ENCODE measurements at regions of chrX and their contacts with region 1.

Region 1: DNA sequence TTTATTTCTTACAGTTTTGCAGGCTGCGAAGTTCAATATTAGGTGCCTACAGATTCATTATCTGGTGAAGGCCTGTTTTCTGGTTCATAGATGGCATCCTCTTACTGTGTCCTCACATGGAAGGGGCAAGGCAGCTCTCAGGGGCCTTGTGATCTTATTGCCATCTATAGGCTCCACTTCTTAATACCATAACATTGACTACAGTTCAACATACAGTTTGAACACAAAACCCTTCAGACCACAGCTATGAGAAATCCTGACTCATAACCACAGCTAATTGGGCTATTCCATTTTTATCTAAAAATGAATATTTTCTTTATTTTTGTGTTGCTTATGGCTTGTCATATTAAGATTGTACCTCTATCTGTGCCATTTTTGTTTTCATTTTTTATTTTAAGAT is 72.3 kb downstream of the STAG2 start:
- DNase-seq: no peak
- ATAC-seq: peak; percentile 21; the same call in 1 of the 3 replicates
- H3K4me3 ChIP-seq: no peak overlapping the region
- H3K27ac ChIP-seq: no peak overlapping the region
- H3K4me1 ChIP-seq: no peaks in the 10 kb centered on the region
- H3K27me3 ChIP-seq: no peaks in the 10 kb centered on the region
- CTCF ChIP-seq: no peak
- EP300 ChIP-seq: no peak
- POLR2A ChIP-seq: no peak
- RAD21 ChIP-seq: no peak

Region 2: GRCh38 chrX:123277821-123278423 is 755.9 kb before region 1 on chrX:
- CTCF ChIA-PET with region 1: no interaction called
- POLR2A ChIA-PET with region 1: no interaction called
- RAD21 ChIA-PET with region 1: no interaction called
- SMC1A ChIA-PET with region 1: no interaction called
- in situ Hi-C with region 1: no loop called
- intact Hi-C with region 1: no loop called
- DNase-seq: no peak
- ATAC-seq: peak; percentile 59
- H3K4me3 ChIP-seq: no peak overlapping the region
- H3K27ac ChIP-seq: no peak overlapping the region
- H3K4me1 ChIP-seq: no peaks in the 10 kb centered on the region
- H3K27me3 ChIP-seq: no peaks in the 10 kb centered on the region
- CTCF ChIP-seq: peak; percentile 11 to 21 (median 11); a peak in 3 of 6 replicates
- EP300 ChIP-seq: no peak
- POLR2A ChIP-seq: no peak
- RAD21 ChIP-seq: peak; percentile 28; the same call in 1 of the 2 replicates

Region 3: GRCh38 chrX:124045109-124045508 is 11.3 kb after region 1 on chrX:
- CTCF ChIA-PET with region 1: interaction called, 4 read pairs
- POLR2A ChIA-PET with region 1: no interaction called
- RAD21 ChIA-PET with region 1: no interaction called
- SMC1A ChIA-PET with region 1: interaction called, 11 read pairs
- in situ Hi-C with region 1: no loop called
- intact Hi-C with region 1: no loop called
- DNase-seq: no peak
- ATAC-seq: no peak
- H3K4me3 ChIP-seq: no peak overlapping the region
- H3K27ac ChIP-seq: no peak overlapping the region
- H3K4me1 ChIP-seq: no peaks in the 10 kb centered on the region
- H3K27me3 ChIP-seq: no peaks in the 10 kb centered on the region
- CTCF ChIP-seq: no peak
- EP300 ChIP-seq: no peak
- POLR2A ChIP-seq: no peak
- RAD21 ChIP-seq: no peak

Measured in GM12878 (cell line).